ENCODE measurements at regions of chr5 and their contacts with region 1.

Region 1: GRCh38 chr5:119347991-119348390 is 7.8 kb upstream of the TNFAIP8 start:
- DNase-seq: no peak
- H3K4me3 ChIP-seq: no peak overlapping the region
- H3K27ac ChIP-seq: no peak overlapping the region
- H3K4me1 ChIP-seq: no peaks in the 10 kb centered on the region
- H3K27me3 ChIP-seq: no peaks in the 10 kb centered on the region
- CTCF ChIP-seq: no peak
- EP300 ChIP-seq: no peak
- POLR2A ChIP-seq: no peak

Region 2: GRCh38 chr5:118996098-118996497 is 351.9 kb before region 1 on chr5:
- intact Hi-C with region 1: loop called in 1 of 4 experiments (anchors 5 kb)
- DNase-seq: no peak
- H3K4me3 ChIP-seq: no peak overlapping the region
- H3K27ac ChIP-seq: no peak overlapping the region
- H3K4me1 ChIP-seq: no peaks in the 10 kb centered on the region
- H3K27me3 ChIP-seq: no peaks in the 10 kb centered on the region
- CTCF ChIP-seq: no peak
- EP300 ChIP-seq: no peak
- POLR2A ChIP-seq: no peak

Region 3: DNA sequence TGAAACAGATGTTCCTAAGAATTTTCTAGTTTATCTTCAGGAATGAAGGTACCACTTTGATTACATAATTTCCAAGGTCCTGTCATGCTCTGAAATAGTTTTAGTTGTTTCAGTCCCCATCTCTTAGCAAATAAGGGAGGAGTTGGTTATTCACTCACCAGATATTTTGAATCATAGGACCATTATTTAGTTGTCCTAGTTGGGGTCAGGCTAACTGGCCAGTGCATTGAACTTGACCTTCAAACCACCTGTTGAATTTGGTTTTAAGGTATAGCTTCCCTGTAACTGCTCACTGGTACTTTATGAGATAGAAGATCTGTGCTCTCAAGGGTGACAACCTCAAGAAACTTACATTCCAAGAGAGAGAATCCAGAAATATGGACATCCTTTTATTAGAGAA is 46.0 kb before region 1 on chr5:
- intact Hi-C with region 1: no loop called
- DNase-seq: no peak
- H3K4me3 ChIP-seq: no peak overlapping the region
- H3K27ac ChIP-seq: no peak overlapping the region
- H3K4me1 ChIP-seq: no peaks in the 10 kb centered on the region
- H3K27me3 ChIP-seq: no peaks in the 10 kb centered on the region
- CTCF ChIP-seq: no peak
- EP300 ChIP-seq: no peak
- POLR2A ChIP-seq: no peak

Region 4: GRCh38 chr5:119757276-119757675 is 409.3 kb after region 1 on chr5:
- intact Hi-C with region 1: no loop called
- DNase-seq: no peak
- H3K4me3 ChIP-seq: no peak overlapping the region
- H3K27ac ChIP-seq: no peak overlapping the region
- H3K4me1 ChIP-seq: no peaks in the 10 kb centered on the region
- H3K27me3 ChIP-seq: no peaks in the 10 kb centered on the region
- CTCF ChIP-seq: no peak
- EP300 ChIP-seq: no peak
- POLR2A ChIP-seq: no peak

Measured in ovary (tissue), 10 donors.